ENCODE measurements at regions of chr7 and their contacts with region 1.

Region 1: DNA sequence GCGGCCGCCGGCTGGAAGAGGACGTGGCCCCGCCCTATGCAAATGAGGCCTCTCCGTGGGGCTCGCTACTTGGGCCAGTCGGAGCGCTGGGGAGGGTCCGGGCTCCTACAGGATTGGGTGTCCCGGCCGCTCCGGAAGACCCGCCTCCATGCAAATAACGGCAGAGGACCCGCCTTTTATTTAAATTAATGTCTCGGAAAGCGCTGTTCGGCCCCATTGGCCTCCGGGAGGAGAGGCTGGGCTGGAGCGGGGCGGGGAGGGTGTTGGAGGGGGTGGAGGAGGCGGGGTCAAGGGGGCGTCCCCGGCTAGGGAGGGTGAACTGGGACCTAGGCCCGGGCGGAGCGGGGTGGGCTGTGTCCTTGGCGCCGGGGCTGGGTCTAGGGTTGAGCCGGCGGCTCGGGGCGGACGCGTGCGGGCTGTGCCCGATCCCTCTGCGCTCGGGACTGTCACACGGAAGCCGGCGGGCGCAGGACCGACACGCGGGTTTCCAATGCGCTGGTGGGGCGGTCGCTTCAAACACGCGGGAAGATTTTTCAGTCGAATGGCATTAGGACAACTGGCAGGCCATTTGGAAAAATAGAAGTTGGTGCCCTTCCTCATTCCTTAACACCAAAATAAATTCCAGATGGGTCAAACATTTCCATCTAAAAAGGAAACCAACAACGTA is 344 bp upstream of the POLM start:
- DNase-seq: peak; percentile 99
- H3K4me3 ChIP-seq: peak overlapping the region; percentile 78 to 94 (median 85)
- H3K27ac ChIP-seq: peak overlapping the region; percentile 89 to 94 (median 92)
- H3K4me1 ChIP-seq: peaks cover 41 to 71% (median 61%) of the 10 kb centered on the region in 4 donors
- H3K27me3 ChIP-seq: no peaks in the 10 kb centered on the region
- CTCF ChIP-seq: peak in 1 of 3 experiments; percentile 2
- EP300 ChIP-seq: no peak
- POLR2A ChIP-seq: peak; percentile 69

Region 2: DNA sequence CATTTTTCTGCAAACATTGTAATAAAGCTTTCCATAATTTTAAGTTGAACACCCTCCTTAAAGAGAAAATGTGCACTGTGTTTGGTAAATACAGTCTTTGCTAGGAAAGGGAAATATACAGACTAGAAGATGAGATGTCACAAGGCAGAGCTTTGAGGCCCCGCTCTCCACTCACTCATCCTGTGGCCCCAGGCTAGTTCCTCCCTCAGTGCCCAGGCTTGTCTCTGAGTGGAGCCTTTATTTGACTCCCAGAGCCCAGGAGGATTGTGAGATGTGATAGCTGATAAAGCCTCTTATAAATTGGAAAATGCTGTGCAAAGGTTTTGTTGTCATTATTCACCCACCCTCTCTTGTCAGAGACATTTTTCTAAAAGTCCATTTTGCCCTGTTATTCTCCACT is 794.3 kb before region 1 on chr7:
- intact Hi-C with region 1: no loop called
- DNase-seq: peak; percentile 42
- H3K4me3 ChIP-seq: no peak overlapping the region
- H3K27ac ChIP-seq: no peak overlapping the region
- H3K4me1 ChIP-seq: no peaks in the 10 kb centered on the region
- H3K27me3 ChIP-seq: no peaks in the 10 kb centered on the region
- CTCF ChIP-seq: no peak
- EP300 ChIP-seq: no peak
- POLR2A ChIP-seq: no peak

Region 3: DNA sequence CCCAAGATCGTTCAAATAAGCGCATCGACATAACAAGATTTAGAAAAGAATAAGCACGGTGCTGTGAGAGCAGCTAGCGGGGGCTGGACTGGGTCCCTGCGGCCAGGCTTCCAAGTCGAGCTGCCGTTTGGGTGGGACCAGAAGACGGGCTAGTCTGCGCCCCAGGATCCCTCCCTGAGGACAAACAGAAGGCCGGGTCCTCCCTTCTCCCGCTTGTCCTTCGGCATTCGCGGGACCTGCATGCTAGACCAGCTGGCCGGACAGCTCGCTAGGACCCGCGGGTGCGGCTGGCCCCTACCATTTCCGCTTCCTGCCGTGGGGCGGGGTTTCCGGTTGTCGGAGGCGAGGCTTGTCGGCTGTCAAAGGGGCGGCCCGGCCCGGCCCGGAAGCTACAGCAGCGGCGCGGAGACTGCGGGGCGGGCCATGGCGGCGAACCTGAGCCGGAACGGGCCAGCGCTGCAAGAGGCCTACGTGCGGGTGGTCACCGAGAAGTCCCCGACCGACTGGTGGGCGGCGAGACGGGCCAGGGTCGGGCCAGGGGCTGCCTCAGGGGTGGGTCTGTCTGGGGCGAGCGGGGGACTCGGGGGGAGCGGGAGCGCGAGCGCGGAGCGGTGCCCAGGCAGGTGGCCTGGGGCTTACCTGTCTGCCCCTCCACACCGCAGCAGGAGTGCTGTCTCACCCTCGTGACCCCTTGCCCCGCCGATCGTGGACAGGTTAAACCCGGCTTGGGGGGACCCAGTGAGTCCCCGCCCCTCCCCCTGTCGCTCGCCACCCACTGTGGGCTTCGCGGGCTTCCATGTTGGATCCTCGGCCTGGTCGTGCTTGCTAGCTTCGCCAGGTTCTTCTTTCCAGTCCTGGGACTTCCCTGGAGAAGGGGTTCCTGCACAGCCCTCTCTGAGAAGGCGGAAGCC is 38.1 kb before region 1 on chr7 and contains the start of gene DBNL:
- intact Hi-C with region 1: loop called (anchors 5 kb)
- DNase-seq: peak; percentile 98
- H3K4me3 ChIP-seq: peak within 1 kb of the TSS; percentile 77 to 99 (median 86)
- H3K27ac ChIP-seq: peak within 1 kb of the TSS; percentile 85 to 93 (median 86)
- H3K4me1 ChIP-seq: peaks cover 34 to 65% (median 50%) of the 10 kb centered on the region in 4 donors
- H3K27me3 ChIP-seq: no peaks in the 10 kb centered on the region
- CTCF ChIP-seq: peak in 1 of 3 experiments; percentile 22
- EP300 ChIP-seq: no peak
- POLR2A ChIP-seq: peak; percentile 55
- total RNA-seq, gene DBNL: 93.9 to 122 (median 115) TPM

Region 4: DNA sequence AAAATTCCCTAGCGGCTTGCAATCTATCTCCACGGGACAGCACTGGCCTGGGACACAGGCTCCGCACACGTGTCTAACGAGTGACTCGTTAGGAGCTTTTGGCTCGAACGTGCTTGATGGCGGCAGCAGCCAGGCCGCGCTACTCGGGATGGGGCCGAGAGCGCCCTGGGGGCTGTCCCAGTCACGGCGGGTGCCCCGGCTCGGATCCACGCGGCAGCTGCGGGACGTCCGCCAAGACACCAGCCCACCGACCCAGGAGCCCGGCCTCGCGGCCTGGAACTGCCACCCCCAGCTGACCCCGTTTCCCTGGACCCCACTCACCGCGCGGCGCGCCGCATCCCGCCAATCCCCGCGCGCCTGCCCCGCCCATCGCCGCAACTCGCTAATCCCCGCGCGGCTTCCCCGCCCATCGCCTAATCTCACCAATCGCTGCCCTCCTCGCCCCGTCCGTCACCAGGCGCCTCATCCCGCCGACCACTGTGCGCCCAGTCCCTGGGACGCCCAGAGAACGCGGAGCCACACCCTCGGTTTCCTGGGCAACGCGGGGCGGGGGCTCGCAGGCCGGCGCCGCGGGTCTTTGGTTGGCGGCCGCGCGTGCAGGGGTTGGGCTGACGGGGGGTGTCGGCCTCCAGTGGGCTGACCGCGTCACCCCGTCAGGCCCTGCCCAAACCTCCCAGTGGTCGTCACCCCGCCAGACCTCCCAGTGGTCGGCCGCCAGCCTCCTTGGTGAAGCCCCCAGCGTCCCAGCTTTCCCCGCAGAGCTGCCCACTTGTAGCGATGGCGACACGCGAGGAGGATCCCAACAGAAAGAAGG is 40.7 kb after region 1 on chr7 and contains the start of gene POLD2:
- intact Hi-C with region 1: loop called (anchors 2 kb)
- DNase-seq: peak; percentile 99
- H3K4me3 ChIP-seq: peak within 1 kb of the TSS; percentile 74 to 81 (median 78)
- H3K27ac ChIP-seq: peak within 1 kb of the TSS; percentile 76 to 95 (median 88)
- H3K4me1 ChIP-seq: peaks cover 22 to 50% (median 40%) of the 10 kb centered on the region in 4 donors
- H3K27me3 ChIP-seq: no peaks in the 10 kb centered on the region
- CTCF ChIP-seq: peak in 2 of 3 experiments; percentile 3 to 12
- EP300 ChIP-seq: no peak
- POLR2A ChIP-seq: peak; percentile 70
- total RNA-seq, gene POLD2: 33.6 to 71.2 (median 55.9) TPM

Region 5: GRCh38 chr7:44152971-44153911 is 70.6 kb after region 1 on chr7:
- intact Hi-C with region 1: no loop called
- DNase-seq: no peak
- H3K4me3 ChIP-seq: no peak overlapping the region
- H3K27ac ChIP-seq: no peak overlapping the region
- H3K4me1 ChIP-seq: no peaks in the 10 kb centered on the region
- H3K27me3 ChIP-seq: no peaks in the 10 kb centered on the region
- CTCF ChIP-seq: no peak
- EP300 ChIP-seq: no peak
- POLR2A ChIP-seq: no peak

Region 6: DNA sequence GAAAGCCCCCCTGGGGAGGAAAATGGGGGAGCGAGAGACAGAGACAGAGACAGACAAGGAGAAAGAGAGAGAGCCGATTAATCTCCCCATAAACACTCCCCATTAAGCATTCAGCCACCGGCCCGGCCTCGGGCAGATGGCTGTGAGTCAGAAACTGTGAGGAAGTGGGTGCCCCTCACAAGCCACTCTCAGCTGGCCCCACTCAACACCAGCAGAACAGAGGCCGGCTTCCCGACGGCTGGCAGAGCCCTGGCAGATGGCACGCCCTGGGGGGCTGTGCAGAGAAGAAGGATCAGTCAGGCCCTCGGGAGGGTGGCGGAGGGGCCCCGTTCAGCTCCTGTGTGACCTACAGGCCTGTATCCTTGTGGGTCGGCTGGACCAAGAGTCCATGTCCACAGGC is 201.5 kb after region 1 on chr7:
- intact Hi-C with region 1: no loop called
- DNase-seq: no peak
- H3K4me3 ChIP-seq: no peak overlapping the region
- H3K27ac ChIP-seq: no peak overlapping the region
- H3K4me1 ChIP-seq: peaks cover 0 to 15% (median 0%) of the 10 kb centered on the region in 4 donors
- H3K27me3 ChIP-seq: no peaks in the 10 kb centered on the region
- CTCF ChIP-seq: no peak
- EP300 ChIP-seq: no peak
- POLR2A ChIP-seq: no peak